Thyroid gland (tissue), 4 donors: ENCODE measurements at regions of chr11 and their contacts with region 1.

Region 1: DNA sequence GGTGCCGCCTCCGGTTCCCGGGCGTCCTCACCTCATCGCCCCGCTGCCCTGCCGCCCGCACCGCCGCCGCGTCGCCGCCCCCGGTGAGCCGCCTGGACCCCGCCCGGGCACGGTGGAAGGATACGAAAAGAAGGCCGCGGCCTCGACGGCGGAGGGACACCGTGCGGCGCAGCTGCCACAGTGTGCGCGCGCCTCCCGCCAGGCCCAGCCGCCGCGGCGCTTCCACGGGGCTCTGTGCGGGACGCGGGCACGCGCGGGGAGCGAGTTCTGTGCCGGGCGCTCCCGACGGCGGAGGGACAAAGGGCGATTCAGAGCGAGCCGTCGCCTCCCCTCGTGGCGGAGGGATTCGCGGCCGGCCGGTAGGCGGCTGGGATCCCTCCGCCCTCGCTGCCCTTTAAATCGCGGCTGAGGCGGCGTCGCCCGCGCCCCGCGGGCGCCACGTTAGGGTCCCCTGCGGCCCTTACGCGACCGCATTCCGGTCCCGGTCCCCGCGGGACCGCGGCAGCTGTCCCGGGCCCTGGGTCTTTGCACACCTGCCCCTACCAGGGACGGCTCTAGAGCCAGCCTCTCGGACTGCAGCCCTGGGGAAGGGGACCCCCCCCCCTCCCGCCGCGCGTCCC is 569 bp upstream of the KMT5B start:
- DNase-seq: peak; percentile 87 to 91
- H3K4me3 ChIP-seq: peak overlapping the region; percentile 58 to 87 (median 74)
- H3K27ac ChIP-seq: peak overlapping the region; percentile 96 to 98 (median 97)
- H3K4me1 ChIP-seq: peaks cover 31 to 32% of the 10 kb centered on the region in 2 donors
- H3K27me3 ChIP-seq: no peaks in the 10 kb centered on the region
- CTCF ChIP-seq: peak in 1 of 6 experiments; percentile 26
- POLR2A ChIP-seq: peak; percentile 87 to 89

Region 2: GRCh38 chr11:68003846-68004550 is 209.7 kb before region 1 on chr11 and contains the start of gene UNC93B1:
- intact Hi-C with region 1: loop called (anchors 10 kb)
- DNase-seq: peak; percentile 88 to 91
- H3K4me3 ChIP-seq: peak within 1 kb of the TSS in 2 of 3 donors; percentile 66 to 69
- H3K27ac ChIP-seq: peak within 1 kb of the TSS in 1 of 3 donors; percentile 37
- H3K4me1 ChIP-seq: peaks cover 4 to 5% of the 10 kb centered on the region in 2 donors
- H3K27me3 ChIP-seq: no peaks in the 10 kb centered on the region
- CTCF ChIP-seq: no peak
- POLR2A ChIP-seq: peak in 1 of 2 donors; percentile 76
- total RNA-seq, gene UNC93B1: 25.7 to 49.2 (median 36.3) TPM